ENCODE measurements at regions of chr16 and their contacts with region 1.

Region 1: DNA sequence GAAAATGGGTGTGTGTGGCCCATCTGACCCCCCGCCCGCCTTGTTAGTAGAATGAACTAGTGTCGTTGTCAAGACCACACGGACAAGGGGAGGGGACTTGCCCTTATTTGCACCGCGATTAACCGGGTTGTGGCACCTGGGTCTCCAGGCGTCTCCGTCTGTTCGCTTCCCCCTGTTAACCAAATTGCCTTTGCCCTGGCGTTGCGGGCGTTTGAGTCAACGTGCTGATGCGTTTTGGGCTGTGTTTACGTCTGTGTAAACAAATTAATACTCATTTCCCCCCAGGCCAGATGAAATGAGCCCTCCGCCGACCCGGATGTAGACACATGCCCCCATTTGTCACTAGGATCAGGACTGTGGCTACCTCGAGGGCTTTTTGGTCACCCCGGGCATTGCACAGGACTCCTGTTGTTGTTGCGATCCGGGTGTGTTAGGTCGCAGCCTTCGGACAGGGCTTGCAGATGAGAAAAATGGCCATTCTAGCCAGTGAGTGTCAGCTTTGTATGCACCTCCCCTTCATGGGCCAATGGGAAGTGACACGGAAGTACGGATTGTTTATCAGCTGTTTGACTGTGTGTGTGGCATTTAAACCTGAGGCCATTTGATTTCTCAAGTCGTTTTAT is 906 bp downstream of the RBL2 start:
- DNase-seq: peak; percentile 63
- H3K4me3 Mint-ChIP-seq: peak overlapping the region; percentile 99
- H3K27ac Mint-ChIP-seq: peak overlapping the region; percentile 98
- H3K4me1 Mint-ChIP-seq: peaks cover 38% of the 10 kb centered on the region
- H3K27me3 Mint-ChIP-seq: no peaks in the 10 kb centered on the region

Region 2: GRCh38 chr16:53372992-53373871 is 61.9 kb before region 1 on chr16:
- intact Hi-C with region 1: loop called (anchors 1 kb)
- DNase-seq: peak; percentile 64
- H3K4me3 Mint-ChIP-seq: peak overlapping the region; percentile 82
- H3K27ac Mint-ChIP-seq: no peak overlapping the region
- H3K4me1 Mint-ChIP-seq: peaks cover 20% of the 10 kb centered on the region
- H3K27me3 Mint-ChIP-seq: peaks cover 28% of the 10 kb centered on the region

Region 3: GRCh38 chr16:53457670-53458069 is 22.5 kb after region 1 on chr16:
- intact Hi-C with region 1: loop called (anchors 1 kb)
- DNase-seq: peak; percentile 80
- H3K4me3 Mint-ChIP-seq: peak overlapping the region; percentile 73
- H3K27ac Mint-ChIP-seq: peak overlapping the region; percentile 94
- H3K4me1 Mint-ChIP-seq: peaks cover 88% of the 10 kb centered on the region
- H3K27me3 Mint-ChIP-seq: no peaks in the 10 kb centered on the region